Spleen (tissue), 13 donors: ENCODE measurements at regions of chr20 and their contacts with region 1.

Region 1: GRCh38 chr20:354298-355064 is 7.6 kb downstream of the NRSN2 start:
- DNase-seq: peak; percentile 92
- H3K4me3 ChIP-seq: no peak overlapping the region
- H3K27ac ChIP-seq: no peak overlapping the region
- H3K4me1 ChIP-seq: peaks cover 0 to 12% (median 9%) of the 10 kb centered on the region in 6 donors
- H3K27me3 ChIP-seq: no peaks in the 10 kb centered on the region
- CTCF ChIP-seq: peak; percentile 92 to 99 (median 97)
- POLR2A ChIP-seq: no peak

Region 2: GRCh38 chr20:431012-431904 is 76.8 kb after region 1 on chr20:
- intact Hi-C with region 1: loop called (anchors 10 kb)
- DNase-seq: no peak
- H3K4me3 ChIP-seq: no peak overlapping the region
- H3K27ac ChIP-seq: peak overlapping the region in 4 of 8 donors; percentile 5 to 28 (median 12)
- H3K4me1 ChIP-seq: peaks cover 0 to 55% (median 22%) of the 10 kb centered on the region in 6 donors
- H3K27me3 ChIP-seq: no peaks in the 10 kb centered on the region
- CTCF ChIP-seq: peak in 10 of 11 experiments; percentile 22 to 66 (median 44)
- POLR2A ChIP-seq: no peak

Region 3: GRCh38 chr20:483813-484644 is 129.5 kb after region 1 on chr20:
- intact Hi-C with region 1: loop called (anchors 5 kb)
- DNase-seq: no peak
- H3K4me3 ChIP-seq: no peak overlapping the region
- H3K27ac ChIP-seq: no peak overlapping the region
- H3K4me1 ChIP-seq: peaks cover 0 to 13% (median 0%) of the 10 kb centered on the region in 6 donors
- H3K27me3 ChIP-seq: no peaks in the 10 kb centered on the region
- CTCF ChIP-seq: no peak
- POLR2A ChIP-seq: no peak

Region 4: GRCh38 chr20:653110-653589 is 298.7 kb after region 1 on chr20 and contains the start of gene SRXN1:
- intact Hi-C with region 1: no loop called
- DNase-seq: peak; percentile 97
- H3K4me3 ChIP-seq: peak within 1 kb of the TSS; percentile 49 to 93 (median 64)
- H3K27ac ChIP-seq: peak within 1 kb of the TSS in 7 of 8 donors; percentile 58 to 93 (median 81)
- H3K4me1 ChIP-seq: peaks cover 13 to 37% (median 28%) of the 10 kb centered on the region in 6 donors
- H3K27me3 ChIP-seq: peaks cover 0 to 25% (median 0%) of the 10 kb centered on the region in 7 donors
- CTCF ChIP-seq: peak in 9 of 11 experiments; percentile 24 to 81 (median 67)
- POLR2A ChIP-seq: no peak
- total RNA-seq, gene SRXN1: 10.6 to 31.3 (median 14.2) TPM